Naive thymus-derived CD4-positive, alpha-beta T cell (primary cell): ENCODE measurements at regions of chr10 and their contacts with region 1.

Region 1: GRCh38 chr10:11165591-11166543 is 148.2 kb downstream of the CELF2 start:
- DNase-seq: peak in 8 of 9 donors; percentile 62 to 89 (median 81)
- ATAC-seq: peak; percentile 74
- H3K4me3 ChIP-seq: peak overlapping the region; percentile 92
- H3K4me3 Mint-ChIP-seq: peak overlapping the region in 4 of 10 donors; percentile 97 to 100 (median 99)
- H3K27ac ChIP-seq: peak overlapping the region; percentile 95
- H3K27ac Mint-ChIP-seq: peak overlapping the region in 5 of 9 donors; percentile 97 to 100 (median 98)
- H3K4me1 ChIP-seq: peaks cover 44 to 50% of the 10 kb centered on the region in 2 donors
- H3K4me1 Mint-ChIP-seq: peaks cover 34 to 39% (median 37%) of the 10 kb centered on the region in 7 donors
- H3K27me3 ChIP-seq: no peaks in the 10 kb centered on the region
- H3K27me3 Mint-ChIP-seq: no peaks in the 10 kb centered on the region

Region 2: DNA sequence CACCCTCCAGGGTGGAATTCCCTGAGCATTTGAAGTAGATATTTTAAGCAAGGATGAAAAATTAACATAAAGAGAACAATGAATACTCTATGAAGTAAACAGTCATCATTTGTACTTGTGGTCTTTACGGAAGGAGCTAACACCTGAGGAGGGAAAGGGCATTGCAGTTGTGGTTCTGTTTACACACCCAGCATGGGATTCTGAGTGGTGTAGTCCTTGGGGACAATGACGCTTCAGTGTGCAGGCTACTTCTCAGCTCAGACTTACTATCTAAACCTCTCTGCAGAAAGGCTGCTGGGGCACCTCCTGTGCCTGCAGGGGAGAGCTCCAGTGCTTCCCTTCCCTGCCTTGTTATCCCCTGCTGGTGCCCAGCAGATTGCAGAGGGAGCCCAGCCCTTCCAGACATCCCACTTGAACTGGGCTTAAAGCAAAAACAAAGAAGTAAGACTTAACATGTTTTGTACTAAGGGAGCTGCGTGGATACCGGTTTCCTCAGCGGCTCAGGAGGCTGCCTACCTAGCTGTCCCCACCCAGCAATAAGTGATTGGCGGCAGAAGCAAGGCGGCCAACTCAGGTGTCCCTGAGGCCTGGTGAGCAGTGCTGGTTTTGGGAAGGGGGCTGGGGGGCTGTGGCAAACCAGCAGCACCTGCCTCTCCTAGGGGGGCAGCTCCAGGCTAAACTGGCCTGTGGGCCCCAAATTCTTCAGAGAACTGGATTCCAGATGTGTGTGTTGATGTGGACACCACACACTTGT is 59.1 kb before region 1 on chr10:
- CTCF ChIA-PET with region 1: interaction called, 39 read pairs
- POLR2A ChIA-PET with region 1: interaction called, 133 read pairs
- intact Hi-C with region 1: no loop called
- DNase-seq: no peak
- ATAC-seq: no peak
- H3K4me3 ChIP-seq: no peak overlapping the region
- H3K4me3 Mint-ChIP-seq: no peak overlapping the region
- H3K27ac ChIP-seq: no peak overlapping the region
- H3K27ac Mint-ChIP-seq: peak overlapping the region in 2 of 9 donors; percentile 43 to 44
- H3K4me1 ChIP-seq: peaks cover 3 to 14% of the 10 kb centered on the region in 2 donors
- H3K4me1 Mint-ChIP-seq: peaks cover 9 to 39% (median 20%) of the 10 kb centered on the region in 7 donors
- H3K27me3 ChIP-seq: no peaks in the 10 kb centered on the region
- H3K27me3 Mint-ChIP-seq: peaks cover 0 to 17% (median 0%) of the 10 kb centered on the region in 5 donors

Region 3: DNA sequence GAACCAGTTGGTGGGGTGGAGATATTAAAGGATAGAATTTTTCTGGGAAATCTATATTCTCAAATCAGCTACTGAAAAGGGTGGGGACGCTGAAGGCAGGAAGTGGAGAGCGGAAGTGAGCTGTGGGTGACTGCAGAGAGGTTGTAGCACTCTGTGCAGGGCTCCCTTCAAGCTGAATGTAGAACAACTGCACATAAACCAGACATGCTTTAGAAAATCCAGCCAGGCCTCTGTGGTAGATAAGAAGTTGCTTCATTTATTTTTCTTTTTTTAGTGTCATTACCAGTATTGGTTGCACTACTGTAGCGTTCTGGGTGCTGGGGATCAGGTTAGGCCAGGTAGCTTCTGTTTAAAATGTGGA is 20.4 kb before region 1 on chr10:
- CTCF ChIA-PET with region 1: interaction called, 71 read pairs
- POLR2A ChIA-PET with region 1: interaction called, 919 read pairs
- intact Hi-C with region 1: loop called (anchors 1 kb)
- DNase-seq: peak; percentile 31 to 85 (median 81)
- ATAC-seq: peak; percentile 75
- H3K4me3 ChIP-seq: peak overlapping the region; percentile 48
- H3K4me3 Mint-ChIP-seq: peak overlapping the region; percentile 73 to 91 (median 80)
- H3K27ac ChIP-seq: peak overlapping the region; percentile 94
- H3K27ac Mint-ChIP-seq: peak overlapping the region; percentile 97 to 99 (median 99)
- H3K4me1 ChIP-seq: peaks cover 79 to 95% of the 10 kb centered on the region in 2 donors
- H3K4me1 Mint-ChIP-seq: peaks cover 73 to 100% (median 93%) of the 10 kb centered on the region in 7 donors
- H3K27me3 ChIP-seq: no peaks in the 10 kb centered on the region
- H3K27me3 Mint-ChIP-seq: no peaks in the 10 kb centered on the region

Region 4: DNA sequence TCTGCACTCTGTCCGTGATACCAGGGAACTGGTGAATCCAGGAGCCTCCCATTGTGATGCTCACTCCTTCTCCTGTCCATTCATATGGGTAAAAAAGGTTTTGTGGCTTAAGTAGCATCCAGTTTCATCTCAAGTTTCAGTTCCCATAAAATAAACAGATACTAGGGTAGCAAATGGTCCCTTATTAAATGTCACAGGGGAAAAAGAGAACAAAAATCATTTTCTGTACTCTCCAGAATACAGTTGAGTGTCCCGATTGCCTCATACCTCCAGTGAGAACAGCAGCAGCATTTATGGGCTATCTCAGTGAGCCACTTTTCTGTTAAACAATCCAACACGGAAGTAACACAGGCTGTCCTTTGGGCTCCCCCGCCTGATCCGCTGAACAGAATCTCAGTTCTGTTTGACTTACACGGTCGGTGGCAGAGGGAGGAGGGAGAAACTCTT is 31.4 kb after region 1 on chr10:
- CTCF ChIA-PET with region 1: no interaction called
- POLR2A ChIA-PET with region 1: interaction called, 3 read pairs
- intact Hi-C with region 1: loop called in 1 of 2 experiments (anchors 1 kb)
- DNase-seq: no peak
- ATAC-seq: peak; percentile 69
- H3K4me3 ChIP-seq: no peak overlapping the region
- H3K4me3 Mint-ChIP-seq: peak overlapping the region in 9 of 10 donors; percentile 6 to 66 (median 36)
- H3K27ac ChIP-seq: peak overlapping the region; percentile 12
- H3K27ac Mint-ChIP-seq: peak overlapping the region in 8 of 9 donors; percentile 38 to 88 (median 86)
- H3K4me1 ChIP-seq: peaks cover 51 to 73% of the 10 kb centered on the region in 2 donors
- H3K4me1 Mint-ChIP-seq: peaks cover 79 to 97% (median 82%) of the 10 kb centered on the region in 7 donors
- H3K27me3 ChIP-seq: no peaks in the 10 kb centered on the region
- H3K27me3 Mint-ChIP-seq: no peaks in the 10 kb centered on the region

Region 5: DNA sequence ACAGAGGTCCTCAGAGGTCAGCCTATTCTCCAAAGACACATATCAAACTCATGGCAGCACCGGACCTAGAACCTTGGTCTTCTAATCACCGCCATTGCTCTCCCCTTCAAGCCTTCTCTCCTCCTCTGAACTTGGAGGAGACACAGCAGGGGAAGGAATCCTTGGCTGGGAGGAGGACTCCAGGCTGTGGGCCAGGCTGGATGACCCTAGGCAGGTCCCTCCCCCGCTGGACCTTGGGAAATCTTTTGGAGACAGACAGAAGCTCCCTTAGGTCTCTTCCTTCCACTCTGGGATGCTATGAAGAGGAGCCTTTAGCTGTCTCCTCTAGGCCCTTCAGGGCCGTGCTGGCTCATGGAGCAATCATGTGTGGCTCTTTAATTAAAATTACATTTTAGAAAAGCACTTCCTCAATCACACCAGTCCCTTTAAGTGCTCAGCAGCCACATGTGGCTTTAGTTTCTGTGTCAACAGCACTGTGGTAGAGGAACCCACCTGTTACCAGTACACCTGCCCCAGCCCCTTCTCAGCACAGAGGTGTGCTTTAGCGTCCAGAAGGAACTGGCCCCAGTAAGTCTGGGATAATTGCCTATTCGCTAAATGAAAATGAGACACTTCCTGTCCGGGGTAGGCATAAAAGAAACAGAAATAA is 90.1 kb after region 1 on chr10:
- CTCF ChIA-PET with region 1: no interaction called
- POLR2A ChIA-PET with region 1: no interaction called
- intact Hi-C with region 1: loop called in 1 of 2 experiments (anchors 5 kb)
- DNase-seq: no peak
- ATAC-seq: no peak
- H3K4me3 ChIP-seq: no peak overlapping the region
- H3K4me3 Mint-ChIP-seq: peak overlapping the region in 4 of 10 donors; percentile 4 to 63 (median 32)
- H3K27ac ChIP-seq: peak overlapping the region; percentile 60
- H3K27ac Mint-ChIP-seq: peak overlapping the region; percentile 46 to 96 (median 88)
- H3K4me1 ChIP-seq: peaks cover 0 to 6% of the 10 kb centered on the region in 2 donors
- H3K4me1 Mint-ChIP-seq: peaks cover 49 to 81% (median 76%) of the 10 kb centered on the region in 7 donors
- H3K27me3 ChIP-seq: no peaks in the 10 kb centered on the region
- H3K27me3 Mint-ChIP-seq: no peaks in the 10 kb centered on the region

Region 6: DNA sequence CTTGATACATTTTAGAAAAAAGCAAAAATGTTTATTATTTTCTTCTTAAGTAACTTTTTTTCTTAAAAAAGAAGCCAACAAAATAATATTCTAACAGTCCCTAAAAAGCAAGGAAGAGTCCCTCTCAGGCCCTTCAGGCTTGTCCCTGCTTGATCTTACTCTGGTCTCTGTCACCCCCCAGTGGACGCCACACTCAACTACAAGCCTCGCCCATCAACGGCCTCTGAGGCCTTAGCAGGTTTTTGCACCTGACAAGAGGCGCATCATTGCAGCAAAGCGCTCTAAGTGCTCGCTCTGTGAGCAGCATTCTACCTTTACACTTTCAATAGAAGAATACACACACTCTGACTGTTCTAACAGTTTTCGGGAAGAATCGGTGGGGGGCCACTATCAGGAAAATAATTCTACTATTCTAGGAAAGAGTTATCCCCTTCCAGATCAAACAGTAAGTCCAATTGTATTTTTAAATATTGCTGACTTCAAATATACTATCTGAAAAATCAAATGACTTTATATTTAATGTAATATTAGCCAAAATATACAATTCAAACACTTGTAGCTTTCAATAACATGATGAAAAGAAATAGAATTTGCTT is 306.4 kb after region 1 on chr10:
- CTCF ChIA-PET with region 1: interaction called, 3 read pairs
- POLR2A ChIA-PET with region 1: no interaction called
- intact Hi-C with region 1: loop called in 1 of 2 experiments (anchors 5 kb)
- DNase-seq: peak; percentile 51 to 74 (median 63)
- ATAC-seq: peak; percentile 94
- H3K4me3 ChIP-seq: no peak overlapping the region
- H3K4me3 Mint-ChIP-seq: no peak overlapping the region
- H3K27ac ChIP-seq: no peak overlapping the region
- H3K27ac Mint-ChIP-seq: peak overlapping the region in 3 of 9 donors; percentile 41 to 85 (median 56)
- H3K4me1 ChIP-seq: no peaks in the 10 kb centered on the region
- H3K4me1 Mint-ChIP-seq: peaks cover 0 to 4% (median 0%) of the 10 kb centered on the region in 7 donors
- H3K27me3 ChIP-seq: no peaks in the 10 kb centered on the region
- H3K27me3 Mint-ChIP-seq: peaks cover 0 to 6% (median 0%) of the 10 kb centered on the region in 5 donors

Region 7: DNA sequence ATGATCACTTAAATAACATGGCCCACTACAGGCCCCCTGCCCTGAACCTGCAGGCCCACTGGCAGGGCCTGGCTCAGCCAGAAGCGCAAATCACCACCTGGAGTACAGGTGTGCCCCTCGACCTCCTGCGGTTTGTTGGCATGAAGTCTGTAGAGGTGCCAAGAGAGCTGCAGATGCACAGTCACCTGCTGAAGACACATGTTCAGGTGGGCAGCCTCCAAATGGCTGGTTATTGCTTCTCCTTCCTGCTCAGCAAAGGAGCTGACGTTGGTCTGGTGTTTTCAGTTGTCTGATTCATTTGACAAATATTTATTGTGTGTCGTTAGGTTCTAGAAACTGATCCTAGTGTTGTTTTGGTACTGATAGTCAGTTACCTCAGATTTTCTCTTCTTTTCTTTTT is 931.9 kb after region 1 on chr10:
- CTCF ChIA-PET with region 1: no interaction called
- POLR2A ChIA-PET with region 1: no interaction called
- intact Hi-C with region 1: no loop called
- DNase-seq: no peak
- ATAC-seq: no peak
- H3K4me3 ChIP-seq: no peak overlapping the region
- H3K4me3 Mint-ChIP-seq: no peak overlapping the region
- H3K27ac ChIP-seq: no peak overlapping the region
- H3K27ac Mint-ChIP-seq: no peak overlapping the region
- H3K4me1 ChIP-seq: no peaks in the 10 kb centered on the region
- H3K4me1 Mint-ChIP-seq: no peaks in the 10 kb centered on the region
- H3K27me3 ChIP-seq: no peaks in the 10 kb centered on the region
- H3K27me3 Mint-ChIP-seq: no peaks in the 10 kb centered on the region